Activated CD4-positive, alpha-beta T cell treated with anti-CD3 and anti-CD28 coated beads, Interleukin-2, amount 10 ng/mL, durations not matched to agents 24 days and 14 days (primary cell): ENCODE measurements at regions of chr2 and their contacts with region 1.

Region 1: GRCh38 chr2:207288628-207289027 is 122.9 kb upstream of the KLF7 start:
- DNase-seq: no peak
- H3K4me3 Mint-ChIP-seq: no peak overlapping the region
- H3K27ac Mint-ChIP-seq: peak overlapping the region; percentile 20
- H3K4me1 Mint-ChIP-seq: peaks cover 39% of the 10 kb centered on the region
- H3K27me3 Mint-ChIP-seq: no peaks in the 10 kb centered on the region

Region 2: DNA sequence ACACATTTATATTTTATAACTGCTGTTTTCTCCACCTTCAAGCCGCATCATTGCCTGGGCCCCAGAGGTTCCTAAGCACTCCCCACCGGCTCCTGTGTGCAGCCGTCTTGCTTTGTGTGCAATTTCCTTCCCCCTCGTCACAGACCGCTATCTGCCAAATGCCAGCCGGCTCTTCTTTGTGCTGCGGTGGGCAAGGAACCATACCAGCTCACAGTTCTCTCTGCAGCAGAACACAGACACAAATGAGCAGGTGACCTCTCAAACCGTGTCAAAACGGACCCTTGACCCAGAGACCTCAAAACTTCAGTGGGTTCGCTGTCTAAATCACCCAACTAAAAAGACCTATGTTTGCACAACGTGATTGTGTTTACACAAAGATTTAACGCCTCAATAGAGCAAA is 181.1 kb before region 1 on chr2:
- intact Hi-C with region 1: no loop called
- DNase-seq: no peak
- H3K4me3 Mint-ChIP-seq: no peak overlapping the region
- H3K27ac Mint-ChIP-seq: no peak overlapping the region
- H3K4me1 Mint-ChIP-seq: peaks cover 5% of the 10 kb centered on the region
- H3K27me3 Mint-ChIP-seq: no peaks in the 10 kb centered on the region

Region 3: GRCh38 chr2:207223051-207223450 is 65.6 kb before region 1 on chr2:
- intact Hi-C with region 1: loop called (anchors 2 kb)
- DNase-seq: peak; percentile 59
- H3K4me3 Mint-ChIP-seq: no peak overlapping the region
- H3K27ac Mint-ChIP-seq: peak overlapping the region; percentile 59
- H3K4me1 Mint-ChIP-seq: peaks cover 35% of the 10 kb centered on the region
- H3K27me3 Mint-ChIP-seq: peaks cover 6% of the 10 kb centered on the region

Region 4: GRCh38 chr2:207254591-207255464 is 33.8 kb before region 1 on chr2:
- intact Hi-C with region 1: no loop called
- DNase-seq: no peak
- H3K4me3 Mint-ChIP-seq: no peak overlapping the region
- H3K27ac Mint-ChIP-seq: no peak overlapping the region
- H3K4me1 Mint-ChIP-seq: peaks cover 17% of the 10 kb centered on the region
- H3K27me3 Mint-ChIP-seq: peaks cover 5% of the 10 kb centered on the region

Region 5: DNA sequence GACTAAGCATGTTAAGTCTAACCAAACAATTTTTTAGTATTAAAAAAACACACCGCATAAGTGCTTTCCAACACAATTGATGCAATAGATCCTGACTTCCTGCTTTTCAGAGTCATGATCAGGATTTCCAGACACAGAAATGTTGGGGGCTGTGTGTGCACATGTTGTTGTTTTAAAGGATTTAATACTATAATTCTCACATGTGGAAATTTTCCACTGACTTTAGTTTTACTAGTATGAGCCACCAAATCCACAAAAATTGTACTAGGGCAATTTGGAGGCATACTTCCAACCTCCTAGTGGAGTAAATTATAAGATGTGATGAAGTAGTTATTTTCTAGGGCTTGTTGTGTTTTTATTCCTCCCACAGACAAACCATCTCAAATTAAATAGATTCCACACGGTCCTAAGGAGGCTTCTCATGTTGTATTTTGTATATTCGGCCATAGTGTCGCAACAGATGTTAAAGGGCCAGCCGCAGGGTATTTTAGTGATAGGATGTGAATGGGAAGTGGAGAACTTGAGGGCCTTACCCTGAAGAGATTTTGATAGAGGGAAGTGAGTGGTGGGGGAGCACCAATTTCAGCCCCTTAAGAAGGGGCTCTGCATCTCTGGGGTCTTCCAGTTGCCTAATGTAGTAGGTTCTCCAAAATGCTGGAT is 14.0 kb before region 1 on chr2:
- intact Hi-C with region 1: no loop called
- DNase-seq: no peak
- H3K4me3 Mint-ChIP-seq: no peak overlapping the region
- H3K27ac Mint-ChIP-seq: no peak overlapping the region
- H3K4me1 Mint-ChIP-seq: peaks cover 3% of the 10 kb centered on the region
- H3K27me3 Mint-ChIP-seq: no peaks in the 10 kb centered on the region

Region 6: GRCh38 chr2:207311316-207312005 is 22.8 kb after region 1 on chr2:
- intact Hi-C with region 1: loop called (anchors 2 kb)
- DNase-seq: peak; percentile 74
- H3K4me3 Mint-ChIP-seq: peak overlapping the region; percentile 28
- H3K27ac Mint-ChIP-seq: peak overlapping the region; percentile 64
- H3K4me1 Mint-ChIP-seq: peaks cover 36% of the 10 kb centered on the region
- H3K27me3 Mint-ChIP-seq: no peaks in the 10 kb centered on the region

Region 7: GRCh38 chr2:207362716-207363115 is 74.1 kb after region 1 on chr2:
- intact Hi-C with region 1: no loop called
- DNase-seq: no peak
- H3K4me3 Mint-ChIP-seq: no peak overlapping the region
- H3K27ac Mint-ChIP-seq: no peak overlapping the region
- H3K4me1 Mint-ChIP-seq: no peaks in the 10 kb centered on the region
- H3K27me3 Mint-ChIP-seq: no peaks in the 10 kb centered on the region